Activated B cell treated with CpG ODN at 0.5 μM for 24 hours (primary cell): ENCODE measurements at regions of chr7 and their contacts with region 1.

Region 1: GRCh38 chr7:130875265-130875741 is 141.3 kb upstream of the KLF14 start:
- DNase-seq: no peak
- ATAC-seq: peak; percentile 81
- H3K4me3 Mint-ChIP-seq: no peak overlapping the region
- H3K27ac Mint-ChIP-seq: no peak overlapping the region
- H3K4me1 Mint-ChIP-seq: peaks cover 24% of the 10 kb centered on the region
- H3K27me3 Mint-ChIP-seq: no peaks in the 10 kb centered on the region
- CTCF ChIP-seq: no peak

Region 2: GRCh38 chr7:131424219-131424822 is 549.0 kb after region 1 on chr7:
- CTCF ChIA-PET with region 1: interaction called, 4 read pairs
- POLR2A ChIA-PET with region 1: no interaction called
- intact Hi-C with region 1: loop called (anchors 1 kb)
- DNase-seq: no peak
- ATAC-seq: peak; percentile 81
- H3K4me3 Mint-ChIP-seq: no peak overlapping the region
- H3K27ac Mint-ChIP-seq: no peak overlapping the region
- H3K4me1 Mint-ChIP-seq: peaks cover 2% of the 10 kb centered on the region
- H3K27me3 Mint-ChIP-seq: no peaks in the 10 kb centered on the region
- CTCF ChIP-seq: no peak